Sciatic nerve (tissue), 2 donors: ENCODE measurements at regions of chr5 and their contacts with region 1.

Region 1: DNA sequence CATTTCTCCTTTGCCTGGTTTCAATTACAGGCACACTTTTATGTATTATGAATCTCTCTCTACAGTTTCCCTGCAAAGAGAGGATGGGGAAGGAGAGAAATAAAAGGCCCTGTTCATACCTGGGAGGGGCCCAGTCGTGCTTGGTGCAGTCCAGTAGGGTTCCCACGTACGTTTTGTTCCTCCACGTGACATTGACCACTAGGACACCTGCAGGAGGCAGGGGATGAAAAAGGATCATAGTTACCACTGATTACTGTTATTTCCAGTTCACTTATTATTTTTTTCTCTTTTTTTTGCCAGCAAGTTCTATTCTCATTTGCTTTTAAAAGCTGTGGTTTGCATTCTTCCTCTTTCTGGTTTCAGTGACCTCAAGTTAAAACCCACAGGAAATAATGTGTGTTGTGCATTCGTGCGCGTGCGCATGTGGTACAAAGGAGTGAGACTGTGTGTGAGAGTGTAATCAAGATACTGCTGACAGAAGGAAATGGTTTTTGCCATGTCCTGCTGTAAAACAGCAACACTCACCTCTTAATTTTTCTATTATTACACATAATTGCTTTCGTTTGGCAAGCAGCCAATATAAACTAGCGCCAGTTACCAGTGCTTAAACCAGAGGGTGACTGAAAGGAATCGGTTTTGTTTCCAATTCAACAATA is 96.8 kb downstream of the ZNF608 start:
- DNase-seq: peak; percentile 82
- ATAC-seq: peak; percentile 71

Region 2: DNA sequence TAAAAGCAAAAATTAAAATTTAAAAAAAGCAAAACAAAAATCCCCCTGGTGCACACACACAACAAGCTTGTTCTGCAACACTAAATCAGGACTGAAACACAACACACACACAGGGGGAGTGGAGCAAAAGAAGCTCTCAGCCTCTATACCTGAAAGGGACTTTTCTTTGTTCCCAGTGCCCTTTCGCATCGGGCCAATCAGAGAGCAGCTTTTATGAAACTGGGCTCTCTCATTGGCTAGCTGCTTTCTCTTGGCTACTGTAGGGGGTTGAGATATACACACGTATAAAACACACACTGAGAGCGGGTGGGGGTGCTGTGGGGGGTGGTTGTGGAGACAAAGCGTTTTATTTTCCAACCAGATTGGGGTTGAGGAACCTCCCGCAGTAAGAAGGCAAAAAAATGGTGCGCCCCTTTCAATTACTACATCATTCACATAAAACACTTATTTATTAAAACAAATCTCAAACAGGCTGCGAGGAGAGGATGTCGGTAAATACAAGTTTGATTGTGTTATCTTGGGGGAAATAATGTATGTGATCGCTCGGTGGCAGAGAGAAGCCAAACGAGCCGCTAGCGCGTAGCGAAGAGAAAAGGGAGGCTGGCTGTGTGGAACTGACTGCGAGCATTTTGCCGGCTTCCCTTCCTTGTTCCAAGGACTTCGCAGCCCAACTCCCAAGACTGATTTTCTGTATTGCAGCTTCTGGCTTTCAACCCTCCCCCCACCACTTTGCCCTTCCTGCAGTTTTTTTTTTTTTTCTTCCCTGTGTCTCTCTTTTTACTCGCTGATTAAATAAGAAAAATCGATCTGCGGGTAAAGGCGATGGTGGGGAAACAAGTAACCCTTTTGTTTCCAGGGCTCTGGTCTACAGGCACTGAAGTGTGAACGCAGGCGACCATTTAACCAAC is 99.3 kb after region 1 on chr5:
- intact Hi-C with region 1: loop called (anchors 10 kb)
- DNase-seq: peak; percentile 70
- ATAC-seq: peak; percentile 84